ENCODE measurements at regions of chr7 and their contacts with region 1.

Region 1: DNA sequence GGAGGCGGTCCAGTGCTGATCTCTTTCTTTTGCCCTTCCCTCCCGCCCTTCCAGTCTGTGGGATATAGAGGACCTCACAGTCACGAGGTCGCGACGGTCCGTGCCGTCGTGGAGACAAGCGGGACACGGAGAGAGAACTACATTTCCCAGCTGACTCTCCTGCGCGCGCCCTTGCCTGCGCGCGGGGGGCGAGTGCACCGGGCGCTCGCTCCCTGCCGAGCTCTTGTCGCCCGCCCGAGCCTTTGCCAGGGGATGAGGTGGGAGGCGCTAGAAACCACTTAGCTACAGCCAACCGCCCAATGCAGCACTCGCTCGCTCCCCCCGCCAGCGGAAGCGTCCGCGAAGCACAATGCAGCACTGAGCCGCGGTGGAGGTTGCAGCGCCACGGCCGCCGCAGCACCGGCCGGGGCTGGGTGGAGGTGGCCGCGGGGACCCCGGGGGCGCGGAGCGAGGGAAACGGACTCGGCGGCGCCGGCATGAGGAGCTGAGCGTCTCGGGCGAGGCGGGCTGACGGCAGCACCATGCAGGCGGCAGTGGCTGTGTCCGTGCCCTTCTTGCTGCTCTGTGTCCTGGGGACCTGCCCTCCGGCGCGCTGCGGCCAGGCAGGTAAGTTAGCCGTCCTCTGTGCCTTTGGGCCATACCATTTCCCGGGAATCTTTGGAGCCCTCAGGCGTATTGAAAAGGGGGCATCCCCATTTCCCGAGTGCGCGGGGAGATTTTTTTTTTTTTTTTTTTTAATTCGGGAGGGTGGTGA is at the start of gene ADAM22:
- DNase-seq: peak; percentile 90
- ATAC-seq: peak; percentile 95
- H3K4me3 Mint-ChIP-seq: peak within 1 kb of the TSS; percentile 91
- H3K27ac Mint-ChIP-seq: peak within 1 kb of the TSS; percentile 86
- H3K4me1 Mint-ChIP-seq: peaks cover 8% of the 10 kb centered on the region
- H3K27me3 Mint-ChIP-seq: peaks cover 16% of the 10 kb centered on the region
- CTCF ChIP-seq: no peak
- total RNA-seq, gene ADAM22: 12.4 to 14.5 TPM (median 14.5 TPM) in 3 replicates

Region 2: DNA sequence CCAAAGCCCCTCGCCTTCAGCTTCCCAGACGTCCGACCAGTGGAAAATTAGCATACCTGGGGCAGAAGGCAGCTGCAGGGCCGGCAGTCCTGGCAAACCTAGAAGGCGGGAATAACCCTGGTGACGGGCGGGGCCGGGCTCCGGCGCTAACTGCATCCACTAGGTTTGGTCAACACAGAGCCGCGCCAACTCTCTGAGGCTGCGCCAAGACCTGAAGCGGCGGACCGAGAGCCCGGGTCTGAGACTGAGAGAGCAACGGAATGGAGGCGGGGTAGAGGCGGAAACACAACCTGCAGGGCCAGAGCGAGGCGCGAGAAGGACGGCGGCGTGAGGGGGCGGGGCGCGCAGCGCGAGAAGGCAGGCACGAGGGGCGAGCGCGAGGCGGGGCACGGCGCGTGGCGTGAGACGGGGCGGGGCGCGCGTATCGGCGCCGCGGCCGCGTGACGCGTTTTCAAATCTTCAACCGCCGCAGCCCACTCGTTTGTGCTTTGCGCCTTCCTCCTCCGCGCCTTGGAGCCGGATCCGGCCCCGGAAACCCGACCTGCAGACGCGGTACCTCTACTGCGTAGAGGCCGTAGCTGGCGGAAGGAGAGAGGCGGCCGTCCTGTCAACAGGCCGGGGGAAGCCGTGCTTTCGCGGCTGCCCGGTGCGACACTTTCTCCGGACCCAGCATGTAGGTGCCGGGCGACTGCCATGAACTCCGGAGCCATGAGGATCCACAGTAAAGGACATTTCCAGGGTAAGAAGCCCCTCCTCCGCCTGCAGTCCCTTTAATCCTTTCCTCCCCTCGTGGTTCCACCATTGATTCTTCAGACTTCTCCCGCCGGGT is 57.9 kb before region 1 on chr7 and contains the starts of genes DBF4 and SLC25A40:
- CTCF ChIA-PET with region 1: no interaction called
- POLR2A ChIA-PET with region 1: interaction called, 10 read pairs
- DNase-seq: peak; percentile 92
- ATAC-seq: peak; percentile 93
- H3K4me3 Mint-ChIP-seq: peak within 1 kb of the TSS; percentile 92
- H3K27ac Mint-ChIP-seq: peak within 1 kb of the TSS; percentile 98
- H3K4me1 Mint-ChIP-seq: peaks cover 25% of the 10 kb centered on the region
- H3K27me3 Mint-ChIP-seq: no peaks in the 10 kb centered on the region
- CTCF ChIP-seq: no peak
- total RNA-seq, gene DBF4: 52.1 to 55.4 TPM (median 54.2 TPM) in 3 replicates
- total RNA-seq, gene SLC25A40: 18.1 to 21.9 TPM (median 21.5 TPM) in 3 replicates